ENCODE measurements at regions of chr19 and their contacts with region 1.

Region 1: DNA sequence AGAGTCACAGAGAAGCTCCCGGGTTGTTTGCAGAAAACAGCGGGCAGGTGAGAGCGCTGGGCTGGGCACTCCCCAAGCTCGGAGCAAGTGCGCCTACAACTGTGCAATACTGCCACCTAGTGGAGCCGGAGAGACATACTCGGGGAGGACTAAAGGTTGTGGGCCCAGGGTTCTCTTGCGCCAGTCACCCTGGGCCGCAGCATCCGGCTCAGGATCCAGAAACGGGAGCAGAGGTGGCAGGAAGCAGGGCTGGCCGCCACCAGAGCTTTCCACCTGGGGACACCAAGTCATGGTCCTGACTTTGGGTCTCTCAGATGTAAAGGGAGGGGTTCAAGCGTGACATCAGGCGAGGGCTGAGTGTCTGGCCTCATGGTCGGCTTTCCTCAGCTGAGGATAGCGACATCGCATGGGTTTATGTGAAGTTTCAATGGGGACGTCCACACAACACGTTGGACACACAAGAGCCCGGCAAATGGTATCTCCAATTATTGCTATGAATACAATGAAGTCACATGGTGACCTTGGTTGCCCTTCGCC is 11.2 kb upstream of the KLK4 start:
- DNase-seq: peak; percentile 82

Region 2: GRCh38 chr19:50724522-50725217 is 197.7 kb before region 1 on chr19:
- intact Hi-C with region 1: loop called (anchors 10 kb)
- DNase-seq: peak; percentile 98

Region 3: DNA sequence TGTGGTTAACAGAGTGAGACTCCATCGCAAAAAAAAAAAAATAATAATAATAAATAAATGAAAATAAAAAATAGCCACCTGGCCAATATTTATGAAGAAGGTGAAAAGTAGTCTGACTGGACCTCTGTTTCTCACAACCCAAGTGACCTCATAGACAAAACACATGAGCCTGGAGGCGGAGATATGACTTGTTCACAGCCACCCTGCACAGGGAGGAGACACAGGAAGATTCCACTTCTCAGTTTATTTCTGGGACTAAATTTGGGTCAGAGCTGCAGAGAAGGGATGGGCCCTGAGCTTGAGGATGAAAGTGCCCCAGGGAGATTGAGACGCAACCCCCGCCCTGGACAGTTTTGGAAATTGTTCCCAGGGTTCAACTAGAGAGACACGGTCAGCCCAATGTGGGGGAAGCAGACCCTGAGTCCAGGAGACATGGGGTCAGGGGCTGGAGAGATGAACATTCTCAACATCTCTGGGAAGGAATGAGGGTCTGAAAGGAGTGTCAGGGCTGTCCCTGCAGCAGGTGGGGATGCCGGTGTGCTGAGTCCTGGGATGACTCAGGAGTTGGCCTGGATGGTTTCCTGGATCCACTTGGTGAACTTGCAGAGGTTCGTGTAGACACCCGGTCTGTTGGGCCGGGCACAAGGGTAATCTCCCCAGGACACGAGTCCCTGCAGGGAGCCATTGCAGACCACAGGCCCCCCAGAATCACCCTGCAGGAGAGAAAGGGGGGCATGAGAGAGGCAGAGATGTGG is 20.9 kb after region 1 on chr19:
- intact Hi-C with region 1: no loop called
- DNase-seq: no peak

Measured in cardiac septum (tissue), 1 donor.